Endothelial cell of umbilical vein (primary cell): ENCODE measurements at regions of chr16 and their contacts with region 1.

Region 1: DNA sequence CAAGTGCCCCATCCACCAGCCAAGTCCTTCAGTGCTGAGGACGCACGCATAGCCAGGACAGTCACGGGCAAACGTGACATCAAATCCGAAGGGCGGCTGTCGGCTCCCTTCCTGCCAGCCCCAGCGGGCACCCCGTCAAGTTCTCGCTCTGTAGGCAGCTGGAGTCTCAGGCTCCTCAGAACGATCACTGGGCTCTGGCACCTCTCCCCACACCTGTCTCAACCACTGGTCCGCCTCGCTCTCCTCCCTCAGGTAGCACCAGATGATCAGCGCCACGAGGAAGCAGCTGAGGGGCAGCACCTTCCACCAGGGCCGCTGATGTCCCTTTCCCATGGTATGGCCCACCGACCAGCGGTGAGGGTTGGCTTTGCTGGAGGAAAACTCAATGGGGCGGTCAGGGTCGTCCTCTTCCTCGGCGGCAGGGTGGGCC is 421 bp downstream of the UQCC4 start:
- DNase-seq: no peak
- H3K4me3 ChIP-seq: peak overlapping the region; percentile 44 to 80 (median 68)
- H3K27ac ChIP-seq: peak overlapping the region; percentile 56
- H3K4me1 ChIP-seq: peaks cover 9% of the 10 kb centered on the region
- H3K27me3 ChIP-seq: no peaks in the 10 kb centered on the region
- CTCF ChIP-seq: no peak
- POLR2A ChIP-seq: no peak

Region 2: GRCh38 chr16:1331712-1332617 is 88.2 kb before region 1 on chr16:
- CTCF ChIA-PET with region 1: no interaction called
- POLR2A ChIA-PET with region 1: no interaction called
- dilution Hi-C with region 1: no loop called
- intact Hi-C with region 1: no loop called
- DNase-seq: peak; percentile 30
- H3K4me3 ChIP-seq: no peak overlapping the region
- H3K27ac ChIP-seq: no peak overlapping the region
- H3K4me1 ChIP-seq: peaks cover 12% of the 10 kb centered on the region
- H3K27me3 ChIP-seq: peaks cover 35 to 48% of the 10 kb centered on the region in 2 experiments
- CTCF ChIP-seq: no peak
- POLR2A ChIP-seq: no peak

Region 3: DNA sequence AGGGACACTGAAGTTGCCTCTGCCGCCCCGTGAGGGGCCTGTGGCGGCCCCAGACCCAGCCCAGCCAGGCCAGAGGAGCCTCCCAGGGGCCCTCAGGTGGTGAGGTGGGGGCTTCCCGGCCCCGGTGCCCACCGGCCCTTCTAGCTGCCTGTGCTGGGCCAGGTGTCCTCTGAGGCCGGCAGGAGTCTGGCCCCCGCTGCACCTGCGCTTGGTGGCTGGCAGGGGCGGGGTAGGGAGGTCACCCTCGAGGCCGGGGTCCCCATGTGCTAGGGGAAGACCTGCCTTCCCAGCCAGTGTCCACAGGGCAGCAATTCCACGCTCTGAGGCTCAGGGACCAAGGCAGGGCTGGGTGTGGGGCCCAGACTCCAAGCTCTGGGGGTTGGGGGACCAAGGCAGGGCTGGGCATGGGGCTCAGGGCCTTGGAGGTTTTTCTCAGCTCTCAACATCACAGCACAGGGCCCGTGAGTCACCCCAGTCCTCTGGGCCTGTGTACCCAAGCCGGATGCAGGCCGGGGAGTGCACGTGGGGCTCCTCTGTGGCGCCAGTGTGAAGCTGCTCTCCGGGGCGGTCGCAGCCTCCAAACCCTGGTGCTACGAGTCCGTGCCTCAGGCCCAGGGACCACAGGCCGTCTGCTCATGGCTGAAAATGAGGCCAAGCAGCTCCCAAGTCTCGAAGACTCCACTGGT is 25.5 kb after region 1 on chr16:
- CTCF ChIA-PET with region 1: no interaction called
- POLR2A ChIA-PET with region 1: no interaction called
- dilution Hi-C with region 1: no loop called
- intact Hi-C with region 1: no loop called
- DNase-seq: no peak
- H3K4me3 ChIP-seq: no peak overlapping the region
- H3K27ac ChIP-seq: no peak overlapping the region
- H3K4me1 ChIP-seq: no peaks in the 10 kb centered on the region
- H3K27me3 ChIP-seq: no peaks in the 10 kb centered on the region
- CTCF ChIP-seq: no peak
- POLR2A ChIP-seq: no peak

Region 4: DNA sequence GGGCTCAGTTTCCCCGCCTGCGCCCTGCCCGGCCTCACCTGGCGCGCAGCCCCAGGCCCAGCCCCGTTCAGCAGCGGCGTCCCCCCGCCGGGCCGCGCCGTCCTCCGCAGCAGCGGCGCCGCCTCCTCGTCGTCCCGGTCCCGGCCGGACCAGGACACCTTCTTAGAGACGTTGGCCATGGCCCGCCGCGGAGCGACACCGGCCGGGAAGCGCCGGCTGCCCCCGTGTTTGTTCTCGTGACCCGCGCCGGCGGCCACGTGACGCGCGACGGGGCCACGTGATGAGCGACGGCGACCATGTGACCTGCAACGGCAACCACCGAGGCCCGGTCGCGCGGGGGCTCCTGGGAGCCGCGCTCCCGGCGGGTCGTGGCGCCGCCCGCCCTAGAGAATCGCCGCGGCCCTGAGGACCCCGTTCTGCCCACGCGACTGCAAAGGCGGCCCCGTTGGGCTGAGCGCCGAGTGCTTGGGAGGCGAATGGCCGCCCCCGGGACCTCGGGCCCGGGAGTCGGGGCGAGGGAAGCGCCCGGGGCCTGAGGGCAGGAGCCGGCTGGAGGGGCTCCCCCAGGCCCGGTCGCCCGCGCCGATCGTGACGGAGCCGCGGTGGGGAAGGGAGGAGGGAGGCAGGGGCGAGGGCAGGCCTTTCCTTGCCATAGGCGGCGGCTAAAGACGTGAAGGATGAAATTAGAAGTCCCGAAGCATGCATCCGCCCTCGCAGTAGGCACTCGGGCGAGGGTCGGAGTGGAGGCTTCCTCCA is 54.8 kb after region 1 on chr16 and contains the start of gene CLCN7:
- CTCF ChIA-PET with region 1: no interaction called
- POLR2A ChIA-PET with region 1: no interaction called
- dilution Hi-C with region 1: no loop called
- intact Hi-C with region 1: loop called (anchors 2 kb)
- DNase-seq: peak; percentile 82
- H3K4me3 ChIP-seq: peak within 1 kb of the TSS; percentile 46 to 64 (median 60)
- H3K27ac ChIP-seq: peak within 1 kb of the TSS; percentile 55
- H3K4me1 ChIP-seq: peaks cover 5% of the 10 kb centered on the region
- H3K27me3 ChIP-seq: no peaks in the 10 kb centered on the region
- CTCF ChIP-seq: no peak
- POLR2A ChIP-seq: peak; percentile 87
- total RNA-seq, gene CLCN7: 89.8 and 94.9 TPM in 2 replicates

Region 5: GRCh38 chr16:1610276-1611017 is 190.3 kb after region 1 on chr16:
- CTCF ChIA-PET with region 1: no interaction called
- POLR2A ChIA-PET with region 1: no interaction called
- dilution Hi-C with region 1: no loop called
- intact Hi-C with region 1: loop called (anchors 5 kb)
- DNase-seq: peak; percentile 91
- H3K4me3 ChIP-seq: peak overlapping the region; percentile 48 to 80 (median 61)
- H3K27ac ChIP-seq: peak overlapping the region; percentile 32
- H3K4me1 ChIP-seq: peaks cover 29% of the 10 kb centered on the region
- H3K27me3 ChIP-seq: no peaks in the 10 kb centered on the region
- CTCF ChIP-seq: no peak
- POLR2A ChIP-seq: no peak